Activated T-helper 2 cell treated with anti-CD3 and anti-CD28 coated beads, Interferon-gamma antibody, Interleukin-2, Interleukin-4, amounts not matched to agents 10 μg/mL and 5 μg/mL and 100 μg/mL, durations not matched to agents 14 hours and 24 hours and 36 hours (primary cell): ENCODE measurements at regions of chr17 and their contacts with region 1.

Region 1: DNA sequence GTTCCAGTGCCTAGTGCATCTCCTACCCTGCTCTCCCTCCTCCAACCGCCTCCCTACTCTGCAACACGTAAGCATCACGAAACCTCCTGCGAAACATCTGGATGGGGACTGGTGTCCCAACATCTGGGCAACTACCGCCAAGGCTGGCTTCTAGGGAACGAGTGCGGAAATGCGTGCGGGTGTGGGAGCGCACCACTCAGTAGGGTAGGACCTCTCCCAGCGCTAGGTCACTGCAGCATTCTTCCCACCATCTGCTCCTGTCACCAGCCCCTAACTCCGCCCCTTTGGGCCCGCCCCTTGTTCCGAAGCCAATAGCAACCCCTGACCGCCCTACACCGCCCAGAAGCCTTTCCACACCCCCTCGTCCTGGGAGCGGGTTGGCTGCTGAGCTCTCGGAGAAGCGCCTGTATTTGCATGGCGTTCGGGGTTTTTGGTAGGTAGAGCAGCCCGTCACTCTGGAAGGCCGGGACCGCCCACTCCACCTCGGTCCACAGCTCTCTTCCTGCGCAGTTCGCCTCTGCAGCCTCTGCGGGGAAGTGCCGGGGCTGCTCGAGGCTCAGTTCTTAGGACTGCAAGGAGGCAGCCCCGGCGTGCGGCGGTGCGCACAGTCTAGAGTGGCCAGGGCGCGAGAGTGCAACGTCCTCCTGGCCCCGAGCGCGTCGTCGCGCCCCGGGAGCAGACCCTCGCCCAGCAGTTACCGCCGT is at the start of gene HS3ST3B1:
- DNase-seq: peak; percentile 99
- H3K4me3 Mint-ChIP-seq: peak within 1 kb of the TSS; percentile 87
- H3K27ac Mint-ChIP-seq: peak within 1 kb of the TSS; percentile 92
- H3K4me1 Mint-ChIP-seq: peaks cover 54% of the 10 kb centered on the region
- H3K27me3 Mint-ChIP-seq: peaks cover 32% of the 10 kb centered on the region
- total RNA-seq, gene HS3ST3B1: 8.6 and 9.8 TPM in 2 replicates

Region 2: DNA sequence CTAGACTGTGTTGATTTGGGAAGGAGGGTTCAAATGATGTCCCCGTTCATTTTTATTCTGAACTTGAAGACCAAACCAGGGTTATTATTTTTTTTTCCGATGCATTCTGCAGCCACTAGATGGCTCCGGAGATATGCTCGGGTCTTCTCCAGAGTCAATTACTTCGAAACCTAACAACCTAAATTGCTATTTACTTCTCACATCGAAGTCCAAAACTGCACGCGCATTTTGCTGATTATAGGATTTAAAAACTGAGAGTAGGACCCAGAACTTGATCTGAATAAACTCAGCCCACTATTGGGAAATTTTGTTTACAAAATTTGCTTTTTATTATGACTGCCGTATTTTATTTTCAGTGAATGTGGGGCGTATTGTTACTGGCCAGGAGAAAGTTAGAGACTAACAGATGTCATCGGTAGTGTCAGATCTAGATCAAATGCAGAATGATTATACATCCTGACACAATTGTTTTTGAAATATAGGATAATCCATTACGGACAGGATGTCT is 962.8 kb before region 1 on chr17:
- intact Hi-C with region 1: loop called (anchors 5 kb)
- DNase-seq: no peak
- H3K4me3 Mint-ChIP-seq: peak overlapping the region; percentile 7
- H3K27ac Mint-ChIP-seq: no peak overlapping the region
- H3K4me1 Mint-ChIP-seq: peaks cover 4% of the 10 kb centered on the region
- H3K27me3 Mint-ChIP-seq: peaks cover 12% of the 10 kb centered on the region

Region 3: DNA sequence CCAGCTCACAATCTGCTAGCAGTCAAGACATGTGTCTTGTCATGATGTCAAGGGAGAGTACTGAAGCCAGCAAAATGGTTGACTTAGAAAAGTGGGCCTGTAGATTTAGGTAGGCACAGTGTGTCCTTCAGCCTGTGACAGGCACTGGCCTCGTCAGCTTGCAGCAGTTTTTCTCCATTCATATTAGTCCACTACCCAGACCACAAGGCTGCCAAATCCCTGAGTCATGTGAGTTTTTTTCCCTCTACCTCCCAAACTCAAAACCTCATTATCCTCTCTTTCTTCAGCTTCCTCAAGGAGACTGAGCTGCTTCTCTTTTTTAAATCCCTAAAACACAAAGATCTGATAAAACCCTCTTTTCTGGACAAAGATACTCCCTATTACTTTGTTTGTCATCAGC is 596.4 kb before region 1 on chr17:
- intact Hi-C with region 1: loop called (anchors 10 kb)
- DNase-seq: no peak
- H3K4me3 Mint-ChIP-seq: no peak overlapping the region
- H3K27ac Mint-ChIP-seq: no peak overlapping the region
- H3K4me1 Mint-ChIP-seq: peaks cover 2% of the 10 kb centered on the region
- H3K27me3 Mint-ChIP-seq: peaks cover 8% of the 10 kb centered on the region

Region 4: DNA sequence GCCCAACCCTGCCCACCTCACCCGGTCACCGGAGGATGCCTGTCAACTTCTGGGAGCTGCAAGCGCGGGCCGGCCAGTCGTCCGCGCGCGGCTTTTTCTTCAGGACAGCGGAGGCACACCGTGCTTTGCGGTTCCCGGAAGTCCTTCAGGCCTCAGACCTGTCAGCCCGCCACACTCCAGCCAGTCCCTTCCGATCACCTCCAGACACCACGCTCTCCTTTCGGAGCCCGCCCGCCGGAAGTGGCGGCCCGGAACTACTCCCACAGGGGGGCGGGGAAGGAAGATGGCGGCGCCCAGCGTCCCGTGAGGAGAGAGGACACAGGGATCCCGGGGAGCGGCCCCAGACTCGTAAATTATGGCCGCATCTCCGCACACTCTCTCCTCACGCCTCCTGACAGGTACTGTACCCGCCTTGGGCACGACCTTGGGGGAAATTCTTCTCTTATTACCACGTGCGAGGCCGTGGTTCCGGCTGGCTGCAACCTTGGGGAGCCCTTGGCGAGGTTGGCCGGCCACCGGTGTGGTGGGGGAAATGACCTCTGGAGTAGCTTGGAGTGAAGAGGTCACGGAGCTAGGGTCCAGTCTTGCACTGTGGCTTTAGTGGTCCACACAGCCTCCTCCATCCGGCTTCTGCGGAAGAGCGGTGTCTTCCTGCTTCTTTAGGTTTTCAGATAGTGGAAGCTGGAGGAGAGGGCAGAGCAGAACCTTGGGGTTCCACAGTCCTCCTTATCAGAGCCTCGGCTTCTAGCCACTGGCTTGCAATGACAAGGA is 231.3 kb before region 1 on chr17 and contains the start of gene COX10:
- intact Hi-C with region 1: loop called (anchors 2 kb)
- DNase-seq: peak; percentile 80
- H3K4me3 Mint-ChIP-seq: peak within 1 kb of the TSS; percentile 96
- H3K27ac Mint-ChIP-seq: peak within 1 kb of the TSS; percentile 94
- H3K4me1 Mint-ChIP-seq: peaks cover 45% of the 10 kb centered on the region
- H3K27me3 Mint-ChIP-seq: no peaks in the 10 kb centered on the region
- total RNA-seq, gene COX10: 24.9 and 28.1 TPM in 2 replicates

Region 5: GRCh38 chr17:14203388-14203787 is 97.3 kb before region 1 on chr17:
- intact Hi-C with region 1: loop called (anchors 1 kb)
- DNase-seq: peak; percentile 24
- H3K4me3 Mint-ChIP-seq: peak overlapping the region; percentile 35
- H3K27ac Mint-ChIP-seq: peak overlapping the region; percentile 83
- H3K4me1 Mint-ChIP-seq: peaks cover 80% of the 10 kb centered on the region
- H3K27me3 Mint-ChIP-seq: no peaks in the 10 kb centered on the region

Region 6: DNA sequence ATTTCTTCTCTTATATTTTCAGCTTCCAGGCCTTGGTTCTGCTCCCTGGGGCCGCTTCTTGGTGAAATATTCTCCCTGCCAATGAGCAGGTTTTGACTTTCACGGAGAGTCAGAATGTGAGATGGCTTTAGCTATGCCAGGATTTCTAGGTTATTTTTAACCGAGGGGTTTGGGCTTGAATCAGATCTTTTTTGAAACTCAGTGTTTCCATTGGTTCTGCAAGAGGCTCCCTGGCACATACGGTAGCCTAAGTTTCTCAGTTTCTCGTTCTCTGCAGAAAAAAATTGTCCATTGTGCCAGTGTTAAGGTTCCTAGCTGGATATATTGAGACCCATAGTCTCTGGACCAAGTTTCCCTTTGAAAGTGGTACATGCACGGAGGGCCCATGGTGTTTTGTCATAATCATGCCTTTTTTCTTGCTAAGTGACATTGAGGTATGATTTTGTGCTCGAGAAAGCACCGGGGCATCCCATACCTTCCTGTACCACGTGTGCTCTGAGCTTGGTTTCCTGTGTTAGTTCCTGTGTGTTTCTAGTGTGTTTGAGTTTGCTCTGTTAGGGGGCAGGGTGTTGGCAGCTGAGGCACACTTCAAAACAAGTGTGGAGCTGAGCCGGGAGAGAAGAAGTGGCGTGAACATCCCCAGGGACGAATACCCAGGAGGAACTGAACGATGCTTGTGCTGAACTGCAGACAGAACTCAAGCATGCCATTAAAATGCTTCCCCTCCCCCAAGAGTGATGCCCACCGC is 127.3 kb after region 1 on chr17:
- intact Hi-C with region 1: loop called (anchors 5 kb)
- DNase-seq: peak; percentile 28
- H3K4me3 Mint-ChIP-seq: peak overlapping the region; percentile 54
- H3K27ac Mint-ChIP-seq: peak overlapping the region; percentile 82
- H3K4me1 Mint-ChIP-seq: peaks cover 32% of the 10 kb centered on the region
- H3K27me3 Mint-ChIP-seq: no peaks in the 10 kb centered on the region